ENCODE measurements at regions of chr3 and their contacts with region 1.

Region 1: GRCh38 chr3:111737706-111738086 is 121.4 kb upstream of the PHLDB2 start:
- H3K4me3 ChIP-seq: no peak overlapping the region
- H3K27ac ChIP-seq: peak overlapping the region; percentile 27; the same call in 1 of the 2 replicates
- H3K4me1 ChIP-seq: peaks cover 21% of the 10 kb centered on the region
- CTCF ChIP-seq: no peak

Region 2: DNA sequence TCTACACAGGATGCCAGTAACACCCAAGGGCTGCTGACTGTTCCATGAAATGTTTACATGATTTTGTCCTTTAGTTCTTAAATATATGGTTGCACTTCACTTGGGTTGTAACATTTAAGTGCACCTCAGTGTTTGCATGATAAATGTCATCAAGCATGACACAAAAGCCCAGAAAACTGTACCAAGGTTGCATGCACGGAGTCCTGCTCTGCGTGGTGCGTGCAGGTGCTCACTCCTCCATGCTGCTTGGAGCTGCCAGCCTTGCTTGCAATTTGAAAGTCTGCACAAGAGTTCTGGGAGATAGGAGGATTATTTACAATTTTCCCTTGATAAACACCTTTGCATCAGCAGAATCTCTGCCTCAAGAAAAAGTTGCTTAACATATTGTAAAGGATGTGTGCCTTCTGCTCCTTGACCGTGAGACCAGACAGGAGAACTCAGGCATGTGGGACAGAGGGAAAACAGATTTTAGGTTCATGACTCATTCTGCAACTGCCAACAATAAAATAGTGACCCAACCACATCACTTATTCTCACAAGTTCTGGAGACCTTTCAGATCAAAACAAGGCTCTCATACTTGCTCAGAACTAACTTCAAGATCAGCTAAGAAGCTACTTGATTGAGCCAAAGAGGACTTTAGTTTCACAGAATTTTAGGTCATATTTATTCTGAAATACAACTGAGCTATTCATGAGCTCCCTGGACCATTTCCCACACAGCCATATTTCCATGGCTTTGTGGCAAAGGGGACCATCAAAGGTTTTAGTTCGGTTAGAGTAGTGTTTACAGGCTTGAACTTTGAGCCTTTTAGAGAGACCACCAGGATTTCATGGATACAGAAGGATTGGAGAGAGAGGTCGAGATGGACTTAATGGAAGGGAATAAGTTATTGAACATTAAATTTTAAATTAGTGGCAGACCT is 14.1 kb before region 1 on chr3:
- CTCF ChIA-PET with region 1: no interaction called
- POLR2A ChIA-PET with region 1: no interaction called
- H3K4me3 ChIP-seq: no peak overlapping the region
- H3K27ac ChIP-seq: no peak overlapping the region
- H3K4me1 ChIP-seq: no peaks in the 10 kb centered on the region
- CTCF ChIP-seq: no peak

Region 3: GRCh38 chr3:111851511-111851954 is 113.8 kb after region 1 on chr3:
- CTCF ChIA-PET with region 1: no interaction called
- POLR2A ChIA-PET with region 1: interaction called, 10 read pairs
- H3K4me3 ChIP-seq: no peak overlapping the region
- H3K27ac ChIP-seq: no peak overlapping the region
- H3K4me1 ChIP-seq: no peaks in the 10 kb centered on the region
- CTCF ChIP-seq: no peak

Region 4: DNA sequence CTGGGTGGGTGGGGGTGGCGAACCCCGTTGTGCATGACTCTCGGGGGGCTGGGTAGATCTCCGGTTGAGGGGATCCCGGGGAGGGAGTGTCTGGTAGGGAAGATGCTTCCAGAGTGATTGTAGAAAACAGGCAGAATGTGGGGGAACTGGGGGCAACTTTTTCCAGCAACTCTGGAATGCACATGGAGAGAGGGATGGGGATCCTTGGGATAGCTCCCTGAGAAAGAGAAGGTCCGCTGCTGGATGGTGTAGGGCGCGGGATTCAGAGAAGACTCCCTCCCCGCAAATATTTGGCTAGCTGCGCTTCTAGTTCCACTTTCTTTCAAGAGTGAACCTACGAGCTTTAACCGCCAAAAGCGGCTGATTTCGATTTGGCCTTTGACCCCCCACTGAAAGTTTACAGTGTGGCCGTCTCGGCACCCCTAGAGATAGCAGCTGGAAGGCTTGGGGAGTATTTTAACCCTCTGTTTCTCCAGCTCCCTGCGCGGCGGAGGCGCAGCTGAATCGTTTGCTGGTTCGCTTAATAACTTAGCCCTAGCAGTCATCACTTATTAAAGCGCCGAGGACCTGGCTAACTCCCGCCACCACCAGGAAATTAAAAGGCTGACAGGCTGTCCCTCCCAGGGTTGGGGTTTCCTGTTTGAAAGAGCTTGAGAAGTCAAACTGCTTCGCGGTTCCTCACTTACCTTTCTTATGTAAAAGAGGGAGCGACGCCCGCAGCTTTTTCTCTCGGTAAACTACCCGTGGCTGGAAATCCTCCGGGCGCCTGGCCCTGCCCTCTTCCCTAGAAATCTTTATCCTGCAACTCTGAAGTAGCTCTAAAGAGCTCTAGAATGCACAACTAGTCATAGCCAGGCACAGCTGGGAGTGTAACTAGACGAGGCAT is 122.5 kb after region 1 on chr3:
- CTCF ChIA-PET with region 1: interaction called, 5 read pairs
- POLR2A ChIA-PET with region 1: interaction called, 16 read pairs
- H3K4me3 ChIP-seq: peak overlapping the region; percentile 92
- H3K27ac ChIP-seq: peak overlapping the region; percentile 86
- H3K4me1 ChIP-seq: peaks cover 17% of the 10 kb centered on the region
- CTCF ChIP-seq: peak; percentile 32; the same call in 1 of the 2 replicates

Region 5: GRCh38 chr3:111947231-111947630 is 209.5 kb after region 1 on chr3:
- CTCF ChIA-PET with region 1: no interaction called
- POLR2A ChIA-PET with region 1: no interaction called
- H3K4me3 ChIP-seq: no peak overlapping the region
- H3K27ac ChIP-seq: no peak overlapping the region
- H3K4me1 ChIP-seq: no peaks in the 10 kb centered on the region
- CTCF ChIP-seq: no peak

Measured in HEK293 (cell line).